ENCODE measurements at regions of chrX and their contacts with region 1.

Region 1: DNA sequence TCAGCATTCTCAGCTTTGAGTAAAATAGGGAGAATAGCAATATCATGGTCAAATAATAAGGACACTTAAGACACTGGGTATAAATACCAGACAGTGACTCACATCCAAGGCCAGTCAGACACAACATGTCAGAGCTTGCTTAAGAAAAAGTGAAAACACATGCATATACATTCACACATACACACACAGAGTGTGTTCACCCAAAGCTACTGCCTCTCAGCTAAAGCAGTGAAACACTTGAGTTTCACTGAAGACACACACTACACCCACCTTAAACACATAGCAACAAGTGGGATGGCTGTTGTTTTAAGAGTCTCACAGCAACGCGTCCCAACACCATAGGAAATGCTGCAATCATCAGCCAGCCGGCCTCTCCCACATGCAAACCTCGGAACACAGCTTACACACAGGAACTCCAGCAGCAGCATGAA is 14.4 kb downstream of the SHROOM4 start:
- DNase-seq: peak; percentile 59
- H3K4me3 ChIP-seq: no peak overlapping the region; the same call in 1 of the 2 replicates
- CTCF ChIP-seq: no peak

Region 2: GRCh38 chrX:50787099-50787498 is 12.4 kb before region 1 on chrX:
- CTCF ChIA-PET with region 1: no interaction called
- POLR2A ChIA-PET with region 1: no interaction called
- DNase-seq: no peak
- H3K4me3 ChIP-seq: no peak overlapping the region
- CTCF ChIP-seq: no peak

Region 3: GRCh38 chrX:50812995-50813826 is 13.7 kb after region 1 on chrX:
- CTCF ChIA-PET with region 1: no interaction called
- POLR2A ChIA-PET with region 1: interaction called, 17 read pairs
- DNase-seq: no peak
- H3K4me3 ChIP-seq: peak overlapping the region; percentile 65
- CTCF ChIP-seq: no peak